ENCODE measurements at regions of chr1 and their contacts with region 1.

Region 1: DNA sequence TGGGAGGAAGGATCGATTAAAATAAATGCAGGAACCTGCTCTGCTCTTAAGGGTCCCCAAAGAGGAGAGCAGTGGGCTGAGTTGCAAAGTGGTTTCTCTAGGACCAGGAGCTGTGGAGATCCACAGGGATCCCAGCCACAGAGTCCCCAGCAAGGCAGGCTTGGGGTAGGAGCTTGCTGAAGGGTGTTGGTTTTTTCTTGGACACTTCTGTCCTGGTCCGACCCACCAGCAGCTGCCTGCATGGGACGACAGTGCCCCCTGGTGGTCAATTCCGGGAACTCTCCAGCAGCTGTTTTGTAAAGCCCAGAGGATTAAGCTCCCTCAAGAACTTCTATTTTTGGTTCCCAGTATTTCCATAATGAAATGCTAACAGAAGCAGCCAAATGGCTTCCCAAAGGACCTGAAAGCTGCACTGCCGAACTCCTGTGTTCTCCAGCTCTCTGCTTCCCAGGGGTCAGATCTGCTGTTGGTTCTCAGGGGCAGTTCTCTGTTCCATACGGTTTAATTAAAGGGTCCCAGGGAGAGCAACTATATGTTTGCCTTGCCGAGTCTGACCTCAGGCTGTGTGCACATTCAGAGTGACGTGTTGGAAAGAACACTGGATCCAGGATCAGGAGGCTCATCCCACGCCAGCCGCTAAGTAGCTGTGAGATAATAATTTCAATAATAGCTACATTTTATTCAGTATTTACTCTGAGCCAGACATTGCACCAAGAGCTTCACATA is 23.2 kb downstream of the NENF start:
- DNase-seq: peak; percentile 55 to 80
- H3K4me3 ChIP-seq: no peak overlapping the region
- H3K27ac ChIP-seq: no peak overlapping the region
- H3K4me1 ChIP-seq: no peaks in the 10 kb centered on the region
- H3K27me3 ChIP-seq: no peaks in the 10 kb centered on the region
- CTCF ChIP-seq: peak; percentile 95

Region 2: GRCh38 chr1:212012034-212012740 is 443.8 kb before region 1 on chr1:
- CTCF ChIA-PET with region 1: no interaction called
- POLR2A ChIA-PET with region 1: no interaction called
- intact Hi-C with region 1: loop called (anchors 5 kb)
- DNase-seq: peak; percentile 49 to 53
- H3K4me3 ChIP-seq: no peak overlapping the region
- H3K27ac ChIP-seq: no peak overlapping the region
- H3K4me1 ChIP-seq: peaks cover 9% of the 10 kb centered on the region; the same call in 1 of the 2 replicates
- H3K27me3 ChIP-seq: no peaks in the 10 kb centered on the region
- CTCF ChIP-seq: peak; percentile 93

Region 3: DNA sequence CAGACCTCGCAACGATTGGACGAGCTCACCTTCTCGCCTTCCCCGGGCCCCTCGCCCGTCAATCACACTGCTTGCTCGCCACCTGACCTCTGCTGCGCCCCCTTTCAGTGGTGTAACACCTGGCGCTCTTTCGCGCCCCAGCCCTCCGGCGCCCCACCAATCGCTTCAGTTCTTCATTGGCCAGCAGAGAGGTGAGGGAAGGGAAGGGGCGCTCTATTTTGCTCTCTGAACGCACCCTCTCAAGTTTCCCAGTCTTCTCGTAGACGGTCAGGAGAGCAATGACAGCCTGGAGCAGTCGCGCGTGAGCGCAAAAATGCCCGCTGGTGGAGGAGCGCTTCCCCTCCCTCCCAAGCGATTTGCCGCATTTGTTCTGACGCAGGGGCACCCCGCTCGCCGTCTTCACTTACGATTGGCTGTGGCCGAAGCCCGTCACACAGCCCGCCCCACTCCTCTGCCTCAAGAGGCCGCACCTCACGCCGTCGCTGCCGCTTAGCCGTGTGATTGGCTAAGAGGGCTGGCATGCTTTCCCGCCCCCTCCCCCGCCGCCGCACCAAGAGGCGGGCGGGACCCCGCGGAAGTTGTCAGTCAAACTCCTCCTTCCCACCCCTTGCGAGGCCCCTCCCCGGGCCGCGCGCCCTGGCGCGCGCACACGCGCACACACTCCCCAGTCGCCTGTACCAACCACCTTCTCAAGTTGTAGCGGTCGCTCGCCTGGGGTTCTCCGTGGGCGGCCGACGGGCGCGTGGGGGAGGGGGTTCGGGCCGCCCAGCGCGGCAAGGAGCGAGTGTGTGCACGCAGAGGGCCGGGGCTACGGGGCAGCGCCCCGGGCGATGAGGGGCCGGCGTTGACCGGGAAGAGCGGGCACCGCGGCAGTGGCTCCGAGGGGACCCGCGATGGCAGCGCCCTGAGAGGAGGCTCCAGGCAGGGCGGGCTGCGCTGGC is 171.0 kb before region 1 on chr1 and contains the start of gene PPP2R5A:
- CTCF ChIA-PET with region 1: interaction called, 5 read pairs
- POLR2A ChIA-PET with region 1: interaction called, 7 read pairs
- intact Hi-C with region 1: loop called (anchors 10 kb)
- DNase-seq: peak; percentile 96 to 99
- H3K4me3 ChIP-seq: peak within 1 kb of the TSS; percentile 89
- H3K27ac ChIP-seq: peak within 1 kb of the TSS; percentile 70
- H3K4me1 ChIP-seq: peaks cover 37% of the 10 kb centered on the region
- H3K27me3 ChIP-seq: no peaks in the 10 kb centered on the region
- CTCF ChIP-seq: no peak; the same call in 1 of the 2 replicates
- total RNA-seq, gene PPP2R5A: 22.8 and 26.7 TPM in 2 replicates

Region 4: GRCh38 chr1:212466898-212467642 is 11.1 kb after region 1 on chr1:
- CTCF ChIA-PET with region 1: no interaction called
- POLR2A ChIA-PET with region 1: no interaction called
- intact Hi-C with region 1: no loop called
- DNase-seq: peak; percentile 75 to 91
- H3K4me3 ChIP-seq: peak overlapping the region; percentile 42; the same call in 1 of the 2 replicates
- H3K27ac ChIP-seq: peak overlapping the region; percentile 69
- H3K4me1 ChIP-seq: peaks cover 38% of the 10 kb centered on the region
- H3K27me3 ChIP-seq: no peaks in the 10 kb centered on the region
- CTCF ChIP-seq: no peak

Region 5: DNA sequence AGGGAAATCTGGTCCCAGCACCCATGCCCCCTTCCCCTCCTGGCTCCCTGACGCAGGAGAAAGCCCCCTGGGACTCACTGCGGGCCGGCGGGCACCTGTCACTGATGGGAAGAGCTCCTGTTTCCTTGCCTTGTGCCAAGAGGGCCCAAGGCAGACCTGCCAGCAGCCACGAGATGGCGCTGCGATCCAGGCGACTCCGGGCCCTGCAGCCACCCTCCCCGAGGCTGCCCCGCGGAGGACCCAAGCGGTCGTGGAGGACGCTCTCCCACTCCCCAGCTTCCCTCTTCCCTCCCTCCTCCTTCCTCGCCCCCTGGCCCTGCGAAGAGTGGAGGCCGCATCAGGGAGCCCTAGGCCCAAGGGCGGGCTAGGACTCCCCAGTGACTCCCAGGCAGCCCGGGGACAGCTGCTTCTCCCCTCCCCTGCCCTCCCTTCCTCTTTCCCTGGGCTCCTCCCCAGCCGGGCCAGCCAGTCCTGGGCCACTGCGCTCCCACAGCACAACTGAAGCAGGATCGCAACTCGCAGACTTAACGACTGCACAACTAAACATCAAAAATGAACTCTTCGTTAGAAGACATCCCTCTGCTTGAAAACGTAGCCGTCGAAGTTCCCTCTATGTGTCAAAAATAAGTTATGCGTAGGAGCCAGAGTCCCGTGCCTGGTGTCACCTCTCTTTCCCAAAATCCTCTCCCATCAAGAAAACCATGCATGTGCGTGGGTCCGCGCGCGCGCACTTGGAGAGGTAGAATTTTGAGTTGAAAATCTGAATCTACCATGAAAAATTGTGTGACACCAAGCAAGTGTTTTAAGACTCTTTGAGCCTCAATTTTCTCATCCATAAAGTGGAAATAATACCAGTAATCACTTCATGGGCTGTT is 209.5 kb after region 1 on chr1:
- CTCF ChIA-PET with region 1: interaction called, 4 read pairs
- POLR2A ChIA-PET with region 1: no interaction called
- intact Hi-C with region 1: loop called (anchors 5 kb)
- DNase-seq: peak; percentile 51 to 84
- H3K4me3 ChIP-seq: peak overlapping the region; percentile 53; the same call in 1 of the 2 replicates
- H3K27ac ChIP-seq: no peak overlapping the region
- H3K4me1 ChIP-seq: peaks cover 22% of the 10 kb centered on the region
- H3K27me3 ChIP-seq: no peaks in the 10 kb centered on the region
- CTCF ChIP-seq: peak; percentile 90

Region 6: GRCh38 chr1:212782422-212783154 is 326.6 kb after region 1 on chr1:
- CTCF ChIA-PET with region 1: no interaction called
- POLR2A ChIA-PET with region 1: no interaction called
- intact Hi-C with region 1: loop called (anchors 1 kb)
- DNase-seq: peak in 1 of 2 experiments; percentile 38
- H3K4me3 ChIP-seq: no peak overlapping the region
- H3K27ac ChIP-seq: no peak overlapping the region
- H3K4me1 ChIP-seq: no peaks in the 10 kb centered on the region
- H3K27me3 ChIP-seq: no peaks in the 10 kb centered on the region
- CTCF ChIP-seq: peak; percentile 81